Posterior vena cava (tissue), 2 donors: ENCODE measurements at regions of chr12 and their contacts with region 1.

Region 1: DNA sequence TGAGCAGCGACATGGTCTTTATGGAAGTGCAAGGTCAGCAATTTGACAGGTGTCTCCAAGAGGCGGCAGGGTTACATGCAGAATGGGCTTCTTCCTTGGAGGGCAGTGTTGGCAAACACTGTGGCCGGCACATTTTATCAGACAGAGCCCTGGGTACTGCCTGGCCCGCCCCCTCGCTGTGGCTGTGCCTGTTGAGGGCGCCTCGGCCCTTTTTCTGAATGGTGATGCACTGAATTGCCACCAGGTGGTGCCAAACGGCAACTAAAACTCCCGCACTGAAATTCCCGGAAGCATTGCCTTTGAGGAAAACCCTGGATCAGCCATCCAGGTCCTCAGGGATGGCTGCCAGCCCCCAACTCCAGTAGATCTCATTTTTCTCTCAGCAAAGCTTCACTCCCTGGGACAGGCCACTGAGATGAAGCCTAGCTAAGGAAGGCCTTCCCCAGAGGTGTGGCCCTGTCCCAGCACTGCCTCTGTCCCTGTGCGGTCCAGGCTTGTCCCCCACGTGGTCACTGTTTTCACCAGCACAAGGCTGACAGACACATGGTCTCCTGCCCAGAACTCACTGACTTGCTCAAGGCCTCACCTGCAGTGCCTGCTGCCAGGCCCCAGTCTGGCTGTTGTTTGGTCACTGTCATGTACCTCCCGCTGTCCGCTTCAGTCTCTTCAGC is 73.6 kb downstream of the TESC start:
- DNase-seq: no peak

Region 2: DNA sequence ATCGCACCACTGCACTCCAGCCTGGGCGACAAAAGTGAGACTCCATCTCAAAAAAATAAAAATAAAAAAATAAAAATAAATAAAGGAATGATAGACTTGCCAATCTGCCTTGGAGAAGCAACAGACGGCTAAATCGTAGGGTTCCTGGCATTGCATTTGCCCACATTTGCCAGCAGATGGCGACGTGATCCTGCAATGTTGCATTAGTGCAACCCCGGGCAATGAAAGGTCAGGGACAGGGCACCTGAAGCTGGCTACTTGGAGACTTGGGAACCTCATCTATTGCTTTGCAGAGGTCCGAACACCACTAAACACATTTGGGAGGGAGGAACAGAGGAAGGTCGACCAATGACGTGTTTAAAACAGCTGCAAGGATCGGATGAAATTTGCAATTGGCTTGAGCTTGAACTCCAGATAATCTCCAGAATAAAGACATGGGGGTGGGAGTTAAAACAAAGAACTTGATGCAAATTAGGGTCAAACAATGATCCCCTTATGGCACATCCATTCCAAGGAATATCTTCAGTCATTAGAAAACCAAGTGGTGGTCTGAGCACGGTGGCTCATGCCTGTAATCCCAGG is 322.3 kb before region 1 on chr12:
- intact Hi-C with region 1: loop called in 1 of 2 experiments (anchors 5 kb)
- DNase-seq: peak; percentile 86

Region 3: GRCh38 chr12:116880817-116881324 is 144.7 kb before region 1 on chr12:
- intact Hi-C with region 1: no loop called
- DNase-seq: no peak

Region 4: GRCh38 chr12:117143008-117143532 is 117.5 kb after region 1 on chr12:
- intact Hi-C with region 1: loop called in 1 of 2 experiments (anchors 10 kb)
- DNase-seq: peak; percentile 74